ENCODE measurements at regions of chr1 and their contacts with region 1.

Region 1: GRCh38 chr1:162561037-162561616 is 395 bp upstream of the UAP1 start:
- DNase-seq: peak; percentile 99
- ATAC-seq: peak; percentile 96 to 97 (median 96)
- H3K4me3 ChIP-seq: peak overlapping the region; percentile 94
- H3K27ac ChIP-seq: peak overlapping the region; percentile 96
- H3K4me1 ChIP-seq: peaks cover 13% of the 10 kb centered on the region
- H3K27me3 ChIP-seq: no peaks in the 10 kb centered on the region
- CTCF ChIP-seq: no peak

Region 2: GRCh38 chr1:162497723-162498500 is 63.2 kb before region 1 on chr1 and contains the start of gene UHMK1:
- intact Hi-C with region 1: loop called in 1 of 2 experiments (anchors 5 kb)
- DNase-seq: peak; percentile 91 to 94
- ATAC-seq: peak; percentile 99 to 100 (median 99)
- H3K4me3 ChIP-seq: peak within 1 kb of the TSS; percentile 99
- H3K27ac ChIP-seq: peak within 1 kb of the TSS; percentile 96
- H3K4me1 ChIP-seq: peaks cover 33% of the 10 kb centered on the region
- H3K27me3 ChIP-seq: no peaks in the 10 kb centered on the region
- CTCF ChIP-seq: no peak
- total RNA-seq, gene UHMK1: 24.3 to 62.1 (median 40.5) TPM

Measured in psoas muscle (tissue), 8 donors.